ENCODE measurements at regions of chr1 and their contacts with region 1.

Region 1: GRCh38 chr1:47380699-47381098 is 35.4 kb upstream of the FOXE3 start:
- DNase-seq: no peak
- CTCF ChIP-seq: no peak

Region 2: DNA sequence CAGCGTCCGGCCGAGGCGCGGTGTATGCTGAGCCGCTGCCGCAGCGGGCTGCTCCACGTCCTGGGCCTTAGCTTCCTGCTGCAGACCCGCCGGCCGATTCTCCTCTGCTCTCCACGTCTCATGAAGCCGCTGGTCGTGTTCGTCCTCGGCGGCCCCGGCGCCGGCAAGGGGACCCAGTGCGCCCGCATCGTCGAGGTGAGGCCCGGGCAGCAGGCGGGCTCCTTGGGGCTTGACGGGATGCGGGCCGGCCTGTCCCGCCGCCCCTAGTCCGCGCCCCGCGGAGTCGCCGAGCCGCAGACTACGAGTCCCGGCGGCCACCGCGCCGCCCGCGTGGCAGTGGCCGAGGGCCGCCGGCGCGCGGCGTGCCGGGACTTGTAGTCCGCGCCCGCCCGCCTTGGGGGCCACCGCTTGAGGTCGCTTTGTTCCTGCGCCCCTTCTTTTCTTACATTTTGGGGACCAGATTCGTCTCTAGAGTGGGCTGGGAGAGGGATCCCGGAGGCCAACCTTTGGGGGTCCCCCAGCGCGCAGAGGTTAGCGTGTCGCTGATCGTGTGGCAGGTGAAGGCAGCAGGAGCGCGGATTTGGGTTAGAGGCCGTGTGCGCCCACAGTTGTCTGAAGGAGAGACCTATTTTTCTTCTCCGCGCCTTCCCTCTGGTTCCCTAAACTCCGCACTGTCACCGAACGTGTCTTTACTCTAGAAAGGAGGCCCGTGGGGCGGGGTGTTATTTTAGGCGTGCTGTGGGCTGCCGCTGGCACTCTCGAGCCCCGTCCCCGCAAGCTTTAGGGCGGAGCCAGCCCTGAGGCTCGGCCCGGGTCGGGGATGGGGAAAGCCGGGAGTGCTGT is 46.6 kb before region 1 on chr1:
- CTCF ChIA-PET with region 1: no interaction called
- POLR2A ChIA-PET with region 1: no interaction called
- DNase-seq: peak; percentile 89
- CTCF ChIP-seq: peak; percentile 34

Region 3: GRCh38 chr1:47367651-47368050 is 13.0 kb before region 1 on chr1:
- CTCF ChIA-PET with region 1: interaction called, 10 read pairs
- POLR2A ChIA-PET with region 1: no interaction called
- DNase-seq: no peak
- CTCF ChIP-seq: no peak

Measured in GM10248 (cell line).